Spleen (tissue), 13 donors: ENCODE measurements at regions of chr10 and their contacts with region 1.

Region 1: GRCh38 chr10:101840741-101841453 is 2.7 kb downstream of the KCNIP2 start:
- DNase-seq: peak; percentile 96
- H3K4me3 ChIP-seq: peak overlapping the region in 7 of 8 donors; percentile 36 to 71 (median 47)
- H3K27ac ChIP-seq: peak overlapping the region in 2 of 8 donors; percentile 3 to 22
- H3K4me1 ChIP-seq: peaks cover 26 to 92% (median 56%) of the 10 kb centered on the region in 6 donors
- H3K27me3 ChIP-seq: peaks cover 0 to 7% (median 0%) of the 10 kb centered on the region in 7 donors
- CTCF ChIP-seq: peak; percentile 88 to 98 (median 95)
- POLR2A ChIP-seq: no peak

Region 2: GRCh38 chr10:101903827-101904550 is 63.1 kb after region 1 on chr10:
- intact Hi-C with region 1: no loop called
- DNase-seq: peak; percentile 78
- H3K4me3 ChIP-seq: no peak overlapping the region
- H3K27ac ChIP-seq: peak overlapping the region in 3 of 8 donors; percentile 29 to 48 (median 33)
- H3K4me1 ChIP-seq: peaks cover 3 to 62% (median 20%) of the 10 kb centered on the region in 6 donors
- H3K27me3 ChIP-seq: no peaks in the 10 kb centered on the region
- CTCF ChIP-seq: no peak
- POLR2A ChIP-seq: no peak

Region 3: DNA sequence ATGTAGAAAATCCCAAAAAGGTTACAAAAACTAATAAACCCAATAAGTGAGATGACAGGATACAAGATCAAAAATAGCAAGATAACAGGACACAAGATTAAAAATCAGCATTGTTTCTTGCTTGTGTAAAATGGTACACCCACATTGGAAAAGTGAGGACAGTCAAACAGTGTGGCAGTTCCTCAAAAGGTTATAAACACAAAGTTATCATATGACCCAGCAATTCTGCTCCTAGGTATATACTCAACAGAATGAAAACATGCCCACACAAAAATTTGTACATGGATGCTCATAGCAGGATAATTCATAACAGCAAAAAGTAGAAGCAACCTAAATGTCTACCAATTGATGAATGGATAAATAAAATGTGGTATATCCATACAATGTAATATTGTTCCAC is 109.3 kb after region 1 on chr10:
- intact Hi-C with region 1: no loop called
- DNase-seq: no peak
- H3K4me3 ChIP-seq: no peak overlapping the region
- H3K27ac ChIP-seq: no peak overlapping the region
- H3K4me1 ChIP-seq: peaks cover 0 to 4% (median 0%) of the 10 kb centered on the region in 6 donors
- H3K27me3 ChIP-seq: no peaks in the 10 kb centered on the region
- CTCF ChIP-seq: no peak
- POLR2A ChIP-seq: no peak

Region 4: DNA sequence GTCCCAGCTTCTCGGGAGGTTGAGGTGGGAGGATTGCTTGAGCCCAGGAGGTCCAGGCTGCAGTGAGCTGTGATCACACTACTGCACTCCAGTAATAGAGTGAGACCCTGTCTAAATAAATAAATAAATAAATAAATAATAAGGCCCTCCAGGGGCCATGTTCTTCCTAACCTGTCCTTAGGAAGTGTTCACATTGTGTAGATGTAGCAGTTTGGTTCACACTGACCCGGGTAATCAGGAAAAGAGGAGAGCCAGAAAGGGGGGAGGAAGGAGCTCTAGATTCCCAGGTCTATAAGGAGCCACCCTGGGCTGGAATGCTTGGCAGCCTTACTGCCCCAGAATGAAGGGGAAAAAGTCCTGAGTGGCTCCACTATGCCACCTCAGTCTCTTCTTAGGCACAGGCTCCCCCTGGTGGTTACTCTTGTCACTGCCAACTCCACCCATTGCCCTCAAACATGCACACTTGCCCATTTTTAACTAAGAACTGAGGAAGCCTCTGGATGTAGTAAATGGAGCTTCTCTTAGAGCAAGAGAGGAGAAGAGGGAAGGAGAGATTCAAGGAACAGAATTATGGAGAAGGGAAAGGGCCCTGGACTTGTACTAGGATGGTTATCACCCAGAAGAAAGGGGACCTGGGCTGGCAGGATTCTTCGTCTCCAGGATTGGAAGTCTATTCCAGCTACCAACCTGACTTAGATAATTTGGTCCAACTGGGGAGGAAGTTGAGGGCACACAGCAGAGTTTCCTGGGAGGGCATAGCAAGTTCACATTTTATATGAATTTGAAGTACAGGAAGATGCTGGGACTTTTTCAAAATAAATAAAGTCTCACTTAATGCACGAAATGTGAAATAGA is 232.0 kb after region 1 on chr10:
- intact Hi-C with region 1: loop called (anchors 5 kb)
- DNase-seq: peak; percentile 86
- H3K4me3 ChIP-seq: no peak overlapping the region
- H3K27ac ChIP-seq: no peak overlapping the region
- H3K4me1 ChIP-seq: peaks cover 3 to 23% (median 16%) of the 10 kb centered on the region in 6 donors
- H3K27me3 ChIP-seq: no peaks in the 10 kb centered on the region
- CTCF ChIP-seq: peak; percentile 84 to 96 (median 94)
- POLR2A ChIP-seq: no peak

Region 5: DNA sequence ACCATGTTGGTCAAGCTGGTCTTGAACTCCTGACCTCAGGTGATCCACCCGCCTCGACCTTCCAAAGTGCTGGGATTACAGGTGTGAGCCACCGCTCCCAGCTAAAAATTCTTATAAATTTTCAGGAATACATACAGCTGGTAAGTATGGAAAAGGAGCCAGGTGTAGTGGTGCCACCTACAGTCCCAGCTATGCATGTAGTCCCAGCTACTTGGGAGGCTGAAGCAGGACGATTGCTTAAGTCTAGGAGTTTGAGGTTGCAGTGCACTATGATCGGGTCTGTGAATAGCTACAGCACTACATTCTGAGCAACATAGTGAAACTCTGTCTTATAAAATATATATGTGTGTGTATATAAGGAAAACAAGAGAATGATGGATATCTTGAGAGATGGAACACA is 260.3 kb after region 1 on chr10:
- intact Hi-C with region 1: no loop called
- DNase-seq: no peak
- H3K4me3 ChIP-seq: no peak overlapping the region
- H3K27ac ChIP-seq: no peak overlapping the region
- H3K4me1 ChIP-seq: peaks cover 0 to 12% (median 4%) of the 10 kb centered on the region in 6 donors
- H3K27me3 ChIP-seq: no peaks in the 10 kb centered on the region
- CTCF ChIP-seq: no peak
- POLR2A ChIP-seq: no peak